Activated B cell treated with CpG ODN at 0.5 μM for 24 hours (primary cell): ENCODE measurements at regions of chr11 and their contacts with region 1.

Region 1: GRCh38 chr11:118171269-118172062 is 5.0 kb downstream of the SCN2B start:
- DNase-seq: peak; percentile 58
- ATAC-seq: peak; percentile 86
- H3K4me3 Mint-ChIP-seq: no peak overlapping the region
- H3K27ac Mint-ChIP-seq: no peak overlapping the region
- H3K4me1 Mint-ChIP-seq: no peaks in the 10 kb centered on the region
- H3K27me3 Mint-ChIP-seq: peaks cover 34% of the 10 kb centered on the region
- CTCF ChIP-seq: peak; percentile 81

Region 2: GRCh38 chr11:117426269-117426685 is 745.2 kb before region 1 on chr11:
- CTCF ChIA-PET with region 1: interaction called, 3 read pairs
- POLR2A ChIA-PET with region 1: no interaction called
- intact Hi-C with region 1: loop called (anchors 5 kb)
- DNase-seq: peak; percentile 52
- ATAC-seq: peak; percentile 62
- H3K4me3 Mint-ChIP-seq: no peak overlapping the region
- H3K27ac Mint-ChIP-seq: no peak overlapping the region
- H3K4me1 Mint-ChIP-seq: peaks cover 7% of the 10 kb centered on the region
- H3K27me3 Mint-ChIP-seq: peaks cover 7% of the 10 kb centered on the region
- CTCF ChIP-seq: peak; percentile 23

Region 3: DNA sequence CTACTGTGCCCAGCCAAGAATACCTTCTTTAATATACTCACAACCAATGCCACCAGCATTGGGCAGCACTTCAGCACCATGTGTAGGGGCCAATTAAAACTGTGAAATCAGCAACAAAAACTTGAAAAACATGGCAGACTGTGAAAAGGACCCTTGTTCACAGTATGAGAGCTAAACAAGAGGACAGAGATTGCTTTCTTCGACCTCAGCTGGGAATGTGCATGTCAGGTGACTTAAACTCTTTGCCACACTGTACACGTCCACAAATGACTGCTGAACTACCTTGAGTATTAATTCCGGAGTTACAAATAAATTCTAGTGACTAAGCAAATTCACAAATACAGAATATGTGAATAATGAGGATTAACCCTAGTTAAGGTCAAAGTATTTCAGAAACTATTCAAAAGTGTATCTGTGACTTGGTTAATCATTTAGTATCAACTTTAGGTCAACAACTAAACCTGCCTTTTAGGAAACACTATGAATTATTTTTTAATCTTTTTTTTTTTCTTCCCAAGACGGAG is 586.5 kb after region 1 on chr11:
- CTCF ChIA-PET with region 1: no interaction called
- POLR2A ChIA-PET with region 1: no interaction called
- intact Hi-C with region 1: no loop called
- DNase-seq: no peak
- ATAC-seq: no peak
- H3K4me3 Mint-ChIP-seq: no peak overlapping the region
- H3K27ac Mint-ChIP-seq: no peak overlapping the region
- H3K4me1 Mint-ChIP-seq: no peaks in the 10 kb centered on the region
- H3K27me3 Mint-ChIP-seq: no peaks in the 10 kb centered on the region
- CTCF ChIP-seq: no peak